Sigmoid colon (tissue), 7 donors: ENCODE measurements at regions of chr6 and their contacts with region 1.

Region 1: GRCh38 chr6:25617997-25618396 is 34.0 kb upstream of the SCGN start:
- DNase-seq: no peak
- H3K4me3 ChIP-seq: no peak overlapping the region
- H3K27ac ChIP-seq: no peak overlapping the region
- H3K4me1 ChIP-seq: no peaks in the 10 kb centered on the region
- H3K27me3 ChIP-seq: no peaks in the 10 kb centered on the region
- CTCF ChIP-seq: no peak
- EP300 ChIP-seq: no peak
- POLR2A ChIP-seq: no peak

Region 2: DNA sequence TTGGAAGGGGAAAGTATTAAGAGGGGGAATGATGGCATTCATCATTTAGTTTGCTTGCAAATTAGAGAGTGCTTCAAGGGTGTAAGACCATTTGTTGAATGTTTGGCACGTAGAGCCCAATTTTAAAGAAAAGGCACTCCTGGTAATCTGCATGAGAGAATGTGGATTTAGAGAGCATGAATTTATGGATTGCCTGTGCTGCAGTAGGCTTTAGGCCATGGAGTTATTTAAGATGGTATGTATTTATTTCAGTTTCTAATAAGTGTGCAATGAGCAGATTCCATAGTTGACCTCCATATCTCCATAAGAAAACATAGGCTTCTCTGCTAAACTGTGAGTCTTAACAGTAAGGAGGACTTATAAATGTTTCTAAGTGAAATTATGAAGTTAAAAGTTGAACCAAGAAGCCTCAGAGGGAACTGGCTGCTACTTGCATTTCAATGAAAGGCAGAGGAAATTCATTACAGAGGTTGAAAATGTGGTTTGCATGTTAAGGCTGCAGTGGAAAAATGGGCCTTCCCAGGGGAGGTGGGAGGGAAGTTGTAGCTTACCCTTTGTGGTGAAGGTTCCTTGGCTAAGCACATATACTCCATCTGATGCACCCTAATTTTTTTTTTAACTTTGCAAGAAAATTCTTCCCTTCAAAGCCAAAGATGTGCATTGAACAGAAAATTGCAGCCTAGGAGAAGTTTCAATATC is 204.6 kb before region 1 on chr6:
- intact Hi-C with region 1: loop called (anchors 5 kb)
- DNase-seq: no peak
- H3K4me3 ChIP-seq: no peak overlapping the region
- H3K27ac ChIP-seq: no peak overlapping the region
- H3K4me1 ChIP-seq: peaks cover 0 to 4% (median 0%) of the 10 kb centered on the region in 4 donors
- H3K27me3 ChIP-seq: no peaks in the 10 kb centered on the region
- CTCF ChIP-seq: no peak
- EP300 ChIP-seq: no peak
- POLR2A ChIP-seq: no peak